ENCODE measurements at regions of chr6 and their contacts with region 1.

Region 1: DNA sequence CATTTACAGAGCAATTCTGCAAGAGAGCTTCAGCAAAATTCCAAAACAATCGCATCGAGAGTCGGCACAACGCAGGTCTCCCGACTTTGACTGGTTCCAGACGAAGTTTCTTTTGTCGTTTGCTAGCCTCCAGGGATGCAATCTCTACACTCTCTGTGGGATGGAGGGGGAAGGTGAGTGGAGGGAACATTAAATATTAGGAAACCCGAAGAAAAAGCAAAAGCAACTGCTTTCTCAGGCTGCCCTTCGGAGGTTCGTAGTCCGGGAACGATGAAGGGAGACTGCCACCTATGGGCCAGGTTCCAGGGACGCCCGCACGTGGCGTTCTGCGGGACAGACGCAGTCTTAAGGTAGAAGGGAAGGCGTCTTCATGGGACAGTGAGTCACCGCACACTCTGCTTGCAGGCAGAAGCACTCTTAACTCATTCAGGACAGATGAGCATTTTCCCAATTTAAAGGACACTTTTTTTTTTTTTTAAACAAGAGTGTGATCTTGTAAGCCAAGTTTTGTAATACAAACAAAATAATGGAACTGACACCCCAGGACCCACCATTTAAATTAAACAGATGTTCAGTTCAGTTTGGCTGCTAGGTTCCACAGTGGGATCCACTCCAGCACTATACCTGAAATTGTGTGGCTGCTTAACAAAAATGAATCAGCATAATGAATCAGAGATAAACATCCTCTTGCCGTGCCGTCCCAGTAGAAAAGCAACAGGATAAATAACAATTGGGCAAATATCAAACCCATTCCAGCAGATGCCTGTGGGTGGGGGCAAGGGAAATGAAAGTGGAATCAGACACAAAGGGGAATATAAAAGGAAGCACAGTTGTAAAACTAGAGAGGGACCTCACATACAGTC is 65.8 kb upstream of the ARMC2 start:
- DNase-seq: peak; percentile 87 to 88
- ATAC-seq: peak; percentile 94 to 99
- H3K4me3 ChIP-seq: peak overlapping the region; percentile 40 to 68 (median 58)
- H3K27ac ChIP-seq: peak overlapping the region; percentile 45 to 71 (median 56)
- H3K4me1 ChIP-seq: peaks cover 5 to 12% of the 10 kb centered on the region in 2 donors
- H3K27me3 ChIP-seq: no peaks in the 10 kb centered on the region
- CTCF ChIP-seq: peak; percentile 45 to 69 (median 66)
- POLR2A ChIP-seq: no peak

Region 2: GRCh38 chr6:108549732-108550131 is 232.7 kb before region 1 on chr6:
- in situ Hi-C with region 1: loop called (anchors 5 to 10 kb)
- intact Hi-C with region 1: no loop called
- DNase-seq: no peak
- ATAC-seq: no peak
- H3K4me3 ChIP-seq: no peak overlapping the region
- H3K27ac ChIP-seq: no peak overlapping the region
- H3K4me1 ChIP-seq: peaks cover 8 to 9% of the 10 kb centered on the region in 2 donors
- H3K27me3 ChIP-seq: no peaks in the 10 kb centered on the region
- CTCF ChIP-seq: no peak
- POLR2A ChIP-seq: no peak

Region 3: GRCh38 chr6:108699290-108700041 is 82.9 kb before region 1 on chr6:
- in situ Hi-C with region 1: no loop called
- intact Hi-C with region 1: loop called (anchors 5 kb)
- DNase-seq: peak in 1 of 2 donors; percentile 43
- ATAC-seq: no peak
- H3K4me3 ChIP-seq: no peak overlapping the region
- H3K27ac ChIP-seq: peak overlapping the region; percentile 15 to 55 (median 50)
- H3K4me1 ChIP-seq: peaks cover 19% of the 10 kb centered on the region in 2 donors
- H3K27me3 ChIP-seq: no peaks in the 10 kb centered on the region
- CTCF ChIP-seq: no peak
- POLR2A ChIP-seq: no peak

Region 4: GRCh38 chr6:108896111-108896661 is 113.8 kb after region 1 on chr6:
- in situ Hi-C with region 1: no loop called
- intact Hi-C with region 1: loop called (anchors 5 kb)
- DNase-seq: no peak
- ATAC-seq: no peak
- H3K4me3 ChIP-seq: no peak overlapping the region
- H3K27ac ChIP-seq: peak overlapping the region; percentile 55 to 75 (median 62)
- H3K4me1 ChIP-seq: peaks cover 31 to 37% of the 10 kb centered on the region in 2 donors
- H3K27me3 ChIP-seq: no peaks in the 10 kb centered on the region
- CTCF ChIP-seq: no peak
- POLR2A ChIP-seq: no peak

Measured in gastrocnemius medialis (tissue), 4 donors.